PC-9 (cell line): ENCODE measurements at regions of chr10 and their contacts with region 1.

Region 1: DNA sequence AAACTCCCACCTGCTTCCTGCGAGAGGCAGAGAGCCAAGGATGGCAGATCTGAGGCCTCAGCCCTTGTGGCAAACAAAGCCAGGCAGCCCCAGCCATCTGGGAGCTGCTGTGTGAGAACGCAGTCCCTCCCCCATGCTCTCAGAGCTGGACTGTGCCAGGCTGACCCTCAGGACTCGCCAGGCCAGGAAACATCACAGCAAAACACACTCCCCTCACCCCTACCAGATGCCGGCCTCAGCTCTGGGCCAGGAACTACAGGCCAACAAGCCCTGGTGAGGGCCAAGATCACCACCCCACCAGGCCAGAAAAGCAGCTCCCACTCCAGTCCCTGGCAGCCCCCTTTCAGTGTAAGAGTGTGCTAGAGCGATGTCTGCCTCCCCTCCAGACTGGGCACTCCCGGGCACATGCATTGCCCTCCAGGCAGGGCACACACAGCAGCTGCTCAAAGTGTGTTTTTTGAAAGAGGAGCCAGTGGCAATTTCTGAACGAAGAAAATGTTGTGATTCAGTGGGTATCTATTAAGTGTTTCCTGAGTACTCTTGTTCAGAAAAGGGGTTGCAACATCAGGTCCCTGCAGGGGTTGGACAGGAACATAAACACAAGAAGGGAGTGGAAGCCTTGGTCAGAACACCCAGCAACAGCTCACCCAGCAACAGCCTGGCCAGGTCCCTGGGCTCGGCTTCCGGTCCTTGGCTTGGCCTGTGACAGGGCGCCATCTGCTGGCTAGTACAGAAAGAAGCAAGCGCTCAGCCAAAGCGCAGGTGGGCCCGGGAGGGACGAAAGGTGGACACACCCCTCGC is 18.3 kb downstream of the LRRC20 start:
- DNase-seq: peak; percentile 94 to 98
- H3K4me3 ChIP-seq: peak overlapping the region; percentile 31; the same call in 1 of the 2 replicates
- H3K27ac ChIP-seq: peak overlapping the region; percentile 83
- H3K4me1 ChIP-seq: peaks cover 22% of the 10 kb centered on the region
- H3K27me3 ChIP-seq: no peaks in the 10 kb centered on the region
- CTCF ChIP-seq: peak; percentile 96

Region 2: GRCh38 chr10:70115948-70116682 is 248.1 kb before region 1 on chr10:
- CTCF ChIA-PET with region 1: interaction called, 3 read pairs
- POLR2A ChIA-PET with region 1: no interaction called
- intact Hi-C with region 1: loop called (anchors 1 kb)
- DNase-seq: peak in 1 of 2 experiments; percentile 54
- H3K4me3 ChIP-seq: no peak overlapping the region
- H3K27ac ChIP-seq: no peak overlapping the region
- H3K4me1 ChIP-seq: no peaks in the 10 kb centered on the region
- H3K27me3 ChIP-seq: no peaks in the 10 kb centered on the region
- CTCF ChIP-seq: peak; percentile 98

Region 3: DNA sequence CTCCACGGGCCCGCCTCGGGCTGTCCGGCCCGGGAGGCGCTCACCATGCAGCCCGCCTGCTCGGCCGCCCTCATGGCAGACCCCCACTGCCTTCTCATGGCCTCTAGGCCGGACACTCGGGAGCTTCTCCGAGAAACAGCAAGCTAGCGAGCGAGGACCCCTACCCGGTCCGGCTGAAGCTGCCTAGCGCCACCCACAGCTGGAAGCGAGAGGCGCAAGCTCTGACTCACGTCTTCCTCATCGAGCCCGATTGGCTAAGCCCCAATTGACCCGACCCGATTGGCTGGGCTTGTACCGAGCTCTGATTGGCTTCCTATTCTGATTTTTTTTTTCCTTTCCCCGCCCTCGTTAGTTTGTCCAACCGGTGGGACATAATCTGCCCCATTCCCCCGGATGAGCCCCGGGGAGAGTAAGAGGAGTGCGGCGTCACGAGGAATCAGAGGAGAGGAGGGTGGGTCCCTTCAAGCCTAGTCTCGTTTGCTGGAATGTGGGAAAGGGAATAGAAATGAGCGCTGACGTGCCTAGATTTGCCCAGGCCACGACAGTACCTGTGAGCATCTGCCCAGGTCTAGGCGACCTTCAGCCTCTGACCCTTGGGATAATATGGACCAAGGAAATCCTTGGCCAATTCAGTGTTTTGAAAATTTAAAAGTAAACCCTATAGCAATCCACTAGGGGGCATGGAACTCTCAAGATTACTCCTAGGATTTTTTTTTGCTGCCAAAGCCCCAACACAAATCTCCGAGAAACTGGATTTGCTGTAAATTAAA is 217.5 kb before region 1 on chr10 and contains the start of gene TYSND1:
- CTCF ChIA-PET with region 1: interaction called, 13 read pairs
- POLR2A ChIA-PET with region 1: no interaction called
- intact Hi-C with region 1: loop called (anchors 10 kb)
- DNase-seq: peak; percentile 98 to 99
- H3K4me3 ChIP-seq: peak within 1 kb of the TSS; percentile 84
- H3K27ac ChIP-seq: peak within 1 kb of the TSS; percentile 70
- H3K4me1 ChIP-seq: peaks cover 15% of the 10 kb centered on the region
- H3K27me3 ChIP-seq: no peaks in the 10 kb centered on the region
- CTCF ChIP-seq: peak; percentile 81
- total RNA-seq, gene TYSND1: 28.0 and 33.5 TPM in 2 replicates

Region 4: GRCh38 chr10:70265032-70265689 is 99.0 kb before region 1 on chr10:
- CTCF ChIA-PET with region 1: interaction called, 6 read pairs
- POLR2A ChIA-PET with region 1: interaction called, 5 read pairs
- intact Hi-C with region 1: loop called (anchors 2 kb)
- DNase-seq: peak; percentile 16 to 21
- H3K4me3 ChIP-seq: no peak overlapping the region
- H3K27ac ChIP-seq: no peak overlapping the region
- H3K4me1 ChIP-seq: peaks cover 20% of the 10 kb centered on the region
- H3K27me3 ChIP-seq: no peaks in the 10 kb centered on the region
- CTCF ChIP-seq: peak; percentile 50; the same call in 1 of the 2 replicates

Region 5: DNA sequence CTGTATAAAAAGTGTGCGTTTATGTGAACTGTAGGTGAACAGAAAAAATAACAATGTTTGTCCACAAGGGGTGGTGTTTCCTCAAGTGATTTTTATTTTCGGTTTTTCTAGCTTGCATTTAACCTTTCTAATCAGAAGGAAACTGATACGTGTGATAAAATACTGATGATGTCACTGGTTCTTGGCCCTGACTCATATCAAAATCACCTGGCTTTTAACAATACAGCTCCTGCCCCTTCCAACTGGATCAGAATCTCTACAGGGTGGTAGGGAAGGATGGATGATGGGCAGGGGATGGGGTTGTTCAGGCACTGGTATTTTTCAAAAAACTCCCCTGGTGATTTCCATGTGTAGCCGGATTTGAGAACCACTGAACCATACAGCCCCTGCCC is 91.2 kb before region 1 on chr10:
- CTCF ChIA-PET with region 1: interaction called, 13 read pairs
- POLR2A ChIA-PET with region 1: no interaction called
- intact Hi-C with region 1: loop called (anchors 2 kb)
- DNase-seq: peak in 1 of 2 experiments; percentile 75
- H3K4me3 ChIP-seq: no peak overlapping the region
- H3K27ac ChIP-seq: no peak overlapping the region
- H3K4me1 ChIP-seq: peaks cover 11% of the 10 kb centered on the region
- H3K27me3 ChIP-seq: no peaks in the 10 kb centered on the region
- CTCF ChIP-seq: peak; percentile 75

Region 6: GRCh38 chr10:70381471-70382421 is 17.6 kb after region 1 on chr10:
- CTCF ChIA-PET with region 1: interaction called, 23 read pairs
- POLR2A ChIA-PET with region 1: interaction called, 9 read pairs
- intact Hi-C with region 1: no loop called
- DNase-seq: peak in 1 of 2 experiments; percentile 52
- H3K4me3 ChIP-seq: peak overlapping the region; percentile 89
- H3K27ac ChIP-seq: no peak overlapping the region
- H3K4me1 ChIP-seq: peaks cover 29% of the 10 kb centered on the region
- H3K27me3 ChIP-seq: no peaks in the 10 kb centered on the region
- CTCF ChIP-seq: no peak

Region 7: DNA sequence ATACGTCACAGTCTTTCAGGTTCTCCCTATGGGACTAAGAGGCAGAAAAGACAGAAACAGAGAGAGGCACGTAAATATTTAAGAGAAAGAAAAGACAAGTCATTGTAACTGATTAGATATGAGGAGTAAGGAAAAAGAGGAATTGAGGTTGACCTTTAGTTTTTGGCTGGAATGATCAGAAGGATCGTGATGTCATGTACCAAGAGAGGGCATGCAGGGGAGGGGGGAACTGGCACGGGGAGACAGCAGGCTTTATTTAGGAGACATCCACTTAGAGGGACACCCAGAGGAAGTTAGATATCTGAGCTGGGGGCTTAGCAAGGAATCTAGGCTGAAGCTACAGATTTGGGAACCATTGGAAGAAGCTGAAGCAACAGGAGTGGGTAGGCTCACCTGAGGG is 27.5 kb after region 1 on chr10:
- CTCF ChIA-PET with region 1: interaction called, 23 read pairs
- POLR2A ChIA-PET with region 1: no interaction called
- intact Hi-C with region 1: loop called (anchors 1 kb)
- DNase-seq: no peak
- H3K4me3 ChIP-seq: no peak overlapping the region
- H3K27ac ChIP-seq: no peak overlapping the region
- H3K4me1 ChIP-seq: peaks cover 5% of the 10 kb centered on the region; the same call in 1 of the 2 replicates
- H3K27me3 ChIP-seq: no peaks in the 10 kb centered on the region
- CTCF ChIP-seq: no peak

Region 8: GRCh38 chr10:70508912-70509756 is 145.0 kb after region 1 on chr10:
- CTCF ChIA-PET with region 1: no interaction called
- POLR2A ChIA-PET with region 1: no interaction called
- intact Hi-C with region 1: no loop called
- DNase-seq: peak in 1 of 2 experiments; percentile 8
- H3K4me3 ChIP-seq: no peak overlapping the region
- H3K27ac ChIP-seq: no peak overlapping the region
- H3K4me1 ChIP-seq: no peaks in the 10 kb centered on the region
- H3K27me3 ChIP-seq: no peaks in the 10 kb centered on the region
- CTCF ChIP-seq: no peak